ENCODE measurements at regions of chr10 and their contacts with region 1.

Region 1: GRCh38 chr10:101297901-101298486 is 56.0 kb upstream of the BTRC start:
- DNase-seq: peak; percentile 45
- H3K4me3 ChIP-seq: no peak overlapping the region
- H3K27ac ChIP-seq: no peak overlapping the region
- H3K4me1 ChIP-seq: peaks cover 12% of the 10 kb centered on the region
- H3K27me3 ChIP-seq: peaks cover 61% of the 10 kb centered on the region
- CTCF ChIP-seq: peak; percentile 83

Region 2: GRCh38 chr10:101441541-101442455 is 143.8 kb after region 1 on chr10:
- intact Hi-C with region 1: loop called (anchors 10 kb)
- DNase-seq: no peak
- H3K4me3 ChIP-seq: no peak overlapping the region
- H3K27ac ChIP-seq: no peak overlapping the region
- H3K4me1 ChIP-seq: peaks cover 36% of the 10 kb centered on the region
- H3K27me3 ChIP-seq: no peaks in the 10 kb centered on the region
- CTCF ChIP-seq: peak; percentile 72

Region 3: GRCh38 chr10:101797403-101798059 is 499.5 kb after region 1 on chr10:
- intact Hi-C with region 1: no loop called
- DNase-seq: no peak
- H3K4me3 ChIP-seq: no peak overlapping the region
- H3K27ac ChIP-seq: no peak overlapping the region
- H3K4me1 ChIP-seq: peaks cover 45% of the 10 kb centered on the region
- H3K27me3 ChIP-seq: no peaks in the 10 kb centered on the region
- CTCF ChIP-seq: no peak